ENCODE measurements at regions of chr11 and their contacts with region 1.

Region 1: DNA sequence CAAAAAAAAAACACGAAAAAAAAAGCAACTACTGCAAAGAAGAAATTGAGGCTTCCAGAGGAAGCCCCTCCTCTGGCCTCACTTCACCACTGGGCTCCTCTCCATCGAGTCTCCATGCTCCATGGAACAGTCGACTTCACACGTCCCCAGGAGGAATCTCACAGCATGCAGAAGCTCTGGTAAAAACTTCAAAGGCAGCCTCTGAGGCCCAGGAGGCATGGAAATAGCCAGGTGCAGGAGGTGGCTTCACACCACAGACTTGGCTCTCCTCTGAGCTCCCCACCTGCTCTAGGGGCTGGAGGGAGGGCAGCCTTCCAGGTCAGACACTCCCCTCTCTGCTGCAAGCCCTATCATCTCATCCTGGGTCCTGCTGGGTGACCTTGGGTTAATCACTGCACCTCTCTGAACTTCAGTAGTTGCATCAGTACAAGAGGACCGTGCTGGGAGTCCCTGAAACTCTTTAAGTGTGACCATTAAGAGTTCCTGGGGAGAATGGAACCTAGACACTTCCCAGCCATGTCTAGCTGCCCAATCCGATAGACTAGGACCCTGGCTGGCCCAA is 8.2 kb downstream of the PDE2A start:
- DNase-seq: no peak
- ATAC-seq: no peak
- H3K4me3 ChIP-seq: no peak overlapping the region
- H3K4me3 Mint-ChIP-seq: no peak overlapping the region
- H3K27ac ChIP-seq: no peak overlapping the region
- H3K27ac Mint-ChIP-seq: no peak overlapping the region
- H3K4me1 ChIP-seq: peaks cover 0 to 4% of the 10 kb centered on the region in 2 experiments
- H3K4me1 Mint-ChIP-seq: peaks cover 0 to 3% (median 2%) of the 10 kb centered on the region in 3 donors
- H3K27me3 ChIP-seq: peaks cover 2 to 66% of the 10 kb centered on the region in 2 experiments
- H3K27me3 Mint-ChIP-seq: peaks cover 4 to 61% of the 10 kb centered on the region in 2 donors

Region 2: DNA sequence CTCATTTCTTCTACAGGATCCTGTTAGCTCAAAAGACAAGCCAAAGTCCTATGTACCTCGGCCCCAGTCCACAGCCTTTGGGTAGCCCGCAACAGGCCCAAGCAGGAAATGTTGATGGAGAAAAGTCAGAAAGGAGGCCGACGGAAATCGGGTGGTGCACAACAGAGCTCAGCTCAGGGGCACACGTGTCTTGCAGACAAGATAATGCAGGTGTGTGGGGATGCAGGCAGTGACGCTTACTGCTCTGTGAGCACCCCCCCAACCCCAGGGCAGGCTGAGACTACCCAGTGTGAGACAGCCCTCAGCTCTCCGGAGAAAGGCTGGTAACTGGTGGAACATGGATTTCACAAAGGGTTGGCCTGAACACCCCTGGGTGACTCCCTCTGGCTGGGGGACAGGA is 12.5 kb after region 1 on chr11:
- CTCF ChIA-PET with region 1: interaction called in 1 of 2 experiments, 3 read pairs
- POLR2A ChIA-PET with region 1: interaction called in 1 of 2 experiments, 10 read pairs
- DNase-seq: no peak
- ATAC-seq: no peak
- H3K4me3 ChIP-seq: no peak overlapping the region
- H3K4me3 Mint-ChIP-seq: no peak overlapping the region
- H3K27ac ChIP-seq: no peak overlapping the region
- H3K27ac Mint-ChIP-seq: no peak overlapping the region
- H3K4me1 ChIP-seq: peaks cover 0 to 15% of the 10 kb centered on the region in 2 experiments
- H3K4me1 Mint-ChIP-seq: peaks cover 11 to 18% (median 12%) of the 10 kb centered on the region in 3 donors
- H3K27me3 ChIP-seq: peaks cover 2 to 51% of the 10 kb centered on the region in 2 experiments
- H3K27me3 Mint-ChIP-seq: peaks cover 7 to 38% of the 10 kb centered on the region in 2 donors

Measured in T-cell (primary cell).